Mammary epithelial cell (primary cell): ENCODE measurements at regions of chr9 and their contacts with region 1.

Region 1: DNA sequence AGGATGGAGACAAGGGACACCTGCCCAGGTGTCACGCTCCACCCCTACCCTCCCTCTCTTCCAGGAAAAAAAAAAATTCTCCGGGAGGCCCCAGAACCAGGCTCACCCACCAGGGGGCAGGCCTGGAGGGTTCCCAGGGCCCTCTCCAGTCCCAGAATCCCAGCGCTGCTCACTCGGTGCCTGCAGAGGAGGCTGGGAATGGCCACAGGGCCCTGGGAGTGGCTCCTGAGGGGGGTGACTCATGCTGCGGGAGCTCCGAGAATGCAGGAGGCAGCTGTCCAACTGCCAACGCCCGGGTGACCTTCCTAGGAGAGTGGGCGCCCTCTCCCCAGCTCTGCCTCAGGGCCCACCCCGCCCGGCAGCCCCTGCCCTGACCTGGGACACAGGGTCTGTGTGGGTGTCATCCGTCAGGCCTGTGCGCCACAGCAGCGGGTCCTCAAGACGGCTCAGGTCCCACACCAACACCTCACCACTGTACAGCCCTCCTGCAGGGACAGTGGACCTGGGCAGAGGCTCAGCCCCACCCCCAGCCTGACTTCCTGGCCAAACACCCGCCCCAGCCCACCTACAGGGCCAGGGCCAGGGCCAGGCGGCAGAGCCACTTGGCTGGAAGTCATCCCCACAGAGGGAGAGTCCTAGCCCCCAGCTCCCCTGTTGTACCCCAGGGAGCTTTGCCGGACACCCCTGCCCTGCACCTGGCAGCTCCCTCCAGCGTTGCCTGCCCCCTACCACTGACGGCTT is 21.2 kb downstream of the DYNC2I2 start:
- DNase-seq: peak; percentile 95
- H3K4me3 ChIP-seq: peak overlapping the region in 2 of 3 experiments; percentile 21 to 27
- H3K27ac ChIP-seq: peak overlapping the region; percentile 71
- H3K4me1 ChIP-seq: peaks cover 28% of the 10 kb centered on the region
- H3K27me3 ChIP-seq: no peaks in the 10 kb centered on the region
- CTCF ChIP-seq: peak; percentile 77 to 85

Region 2: GRCh38 chr9:128438343-128439109 is 196.9 kb before region 1 on chr9:
- CTCF ChIA-PET with region 1: no interaction called
- dilution Hi-C with region 1: no loop called
- in situ Hi-C with region 1: no loop called
- intact Hi-C with region 1: loop called (anchors 2 kb)
- DNase-seq: peak; percentile 47
- H3K4me3 ChIP-seq: no peak overlapping the region
- H3K27ac ChIP-seq: no peak overlapping the region
- H3K4me1 ChIP-seq: no peaks in the 10 kb centered on the region
- H3K27me3 ChIP-seq: no peaks in the 10 kb centered on the region
- CTCF ChIP-seq: peak; percentile 78 to 96

Region 3: DNA sequence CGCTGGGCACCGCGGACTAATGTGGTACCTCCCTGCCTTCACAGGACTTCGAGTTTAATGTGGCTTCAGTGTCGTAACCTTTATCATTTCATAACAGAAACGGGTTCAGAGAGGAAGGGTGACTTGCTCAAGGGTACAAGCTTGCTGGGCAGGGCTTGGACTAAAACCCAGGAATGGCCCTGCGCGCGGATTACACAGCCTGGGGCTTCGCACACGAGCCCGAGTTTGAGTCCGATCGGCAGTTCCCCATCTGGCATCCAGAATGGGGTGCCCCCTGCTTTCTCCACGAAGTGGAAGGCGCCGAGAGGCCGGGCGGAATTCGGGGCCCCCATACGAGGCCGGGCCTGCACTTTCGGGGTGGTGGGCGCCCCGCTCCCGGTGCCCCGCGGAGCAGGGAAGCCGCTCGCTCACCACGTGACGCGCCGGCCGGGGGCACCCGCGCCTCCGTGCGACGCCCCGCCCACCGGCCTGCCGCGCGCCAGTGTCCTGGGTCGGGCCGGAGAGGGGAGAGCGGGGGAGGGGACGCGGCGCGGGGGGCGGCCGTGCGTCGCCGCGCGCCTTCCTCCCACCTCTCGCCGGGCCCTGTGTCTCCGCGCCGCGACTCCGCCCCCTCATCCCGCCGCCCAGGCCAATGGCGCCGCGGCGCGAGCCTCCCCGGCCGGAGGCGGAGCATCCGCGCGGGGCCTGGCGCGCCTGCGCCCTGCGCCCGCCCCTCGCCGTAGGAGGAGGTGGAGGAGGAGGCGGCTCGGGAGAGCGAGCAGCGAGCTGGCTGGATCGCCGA is 53.2 kb after region 1 on chr9 and contains the start of gene SET:
- CTCF ChIA-PET with region 1: interaction called, 3 read pairs
- dilution Hi-C with region 1: no loop called
- in situ Hi-C with region 1: no loop called
- intact Hi-C with region 1: loop called (anchors 1 kb)
- DNase-seq: peak; percentile 90
- H3K4me3 ChIP-seq: peak within 1 kb of the TSS; percentile 79 to 92 (median 81)
- H3K27ac ChIP-seq: peak within 1 kb of the TSS; percentile 58
- H3K4me1 ChIP-seq: peaks cover 35% of the 10 kb centered on the region
- H3K27me3 ChIP-seq: no peaks in the 10 kb centered on the region
- CTCF ChIP-seq: no peak
- total RNA-seq, gene SET: 282 to 484 TPM

Region 4: DNA sequence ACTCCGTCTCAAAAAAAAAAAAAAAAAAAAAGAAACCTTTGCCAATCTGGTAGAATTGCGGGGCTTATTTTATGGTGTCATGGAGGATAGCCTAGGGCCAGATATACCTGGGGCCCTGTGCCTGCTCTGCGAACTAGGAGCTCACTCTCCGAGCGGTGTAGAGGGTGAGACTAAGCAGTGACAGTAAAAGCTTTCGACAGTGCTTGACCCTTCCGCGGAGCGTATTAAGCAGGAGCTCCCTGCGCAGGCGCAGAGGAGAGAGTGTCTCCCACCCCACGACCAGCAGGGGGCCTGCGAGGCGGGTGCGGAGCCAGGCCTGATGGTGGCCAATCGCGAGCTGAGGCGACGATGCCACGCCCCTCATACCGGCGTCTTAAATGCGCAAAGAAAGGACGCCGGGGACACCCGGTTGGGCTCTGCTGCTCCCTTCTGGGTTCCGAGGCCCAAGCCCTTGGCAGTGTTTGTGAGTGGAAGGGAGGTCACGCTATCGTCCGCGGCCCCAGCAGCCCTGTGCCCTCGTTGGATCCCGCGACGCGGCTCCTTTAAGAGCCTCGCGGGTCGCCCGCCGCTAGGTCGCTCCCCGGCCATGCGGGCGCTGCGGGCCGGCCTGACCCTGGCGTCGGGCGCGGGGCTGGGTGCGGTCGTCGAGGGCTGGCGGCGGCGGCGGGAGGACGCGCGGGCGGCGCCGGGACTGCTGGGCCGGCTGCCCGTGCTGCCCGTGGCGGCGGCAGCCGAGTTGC is 182.8 kb after region 1 on chr9 and contains the start of gene ENDOG:
- CTCF ChIA-PET with region 1: interaction called, 7 read pairs
- dilution Hi-C with region 1: no loop called
- in situ Hi-C with region 1: no loop called
- intact Hi-C with region 1: loop called (anchors 1 kb)
- DNase-seq: peak; percentile 93
- H3K4me3 ChIP-seq: peak within 1 kb of the TSS; percentile 75 to 80 (median 76)
- H3K27ac ChIP-seq: peak within 1 kb of the TSS; percentile 41
- H3K4me1 ChIP-seq: peaks cover 16% of the 10 kb centered on the region
- H3K27me3 ChIP-seq: no peaks in the 10 kb centered on the region
- CTCF ChIP-seq: peak; percentile 96 to 99
- total RNA-seq, gene ENDOG: 30.8 to 40.3 TPM

Region 5: DNA sequence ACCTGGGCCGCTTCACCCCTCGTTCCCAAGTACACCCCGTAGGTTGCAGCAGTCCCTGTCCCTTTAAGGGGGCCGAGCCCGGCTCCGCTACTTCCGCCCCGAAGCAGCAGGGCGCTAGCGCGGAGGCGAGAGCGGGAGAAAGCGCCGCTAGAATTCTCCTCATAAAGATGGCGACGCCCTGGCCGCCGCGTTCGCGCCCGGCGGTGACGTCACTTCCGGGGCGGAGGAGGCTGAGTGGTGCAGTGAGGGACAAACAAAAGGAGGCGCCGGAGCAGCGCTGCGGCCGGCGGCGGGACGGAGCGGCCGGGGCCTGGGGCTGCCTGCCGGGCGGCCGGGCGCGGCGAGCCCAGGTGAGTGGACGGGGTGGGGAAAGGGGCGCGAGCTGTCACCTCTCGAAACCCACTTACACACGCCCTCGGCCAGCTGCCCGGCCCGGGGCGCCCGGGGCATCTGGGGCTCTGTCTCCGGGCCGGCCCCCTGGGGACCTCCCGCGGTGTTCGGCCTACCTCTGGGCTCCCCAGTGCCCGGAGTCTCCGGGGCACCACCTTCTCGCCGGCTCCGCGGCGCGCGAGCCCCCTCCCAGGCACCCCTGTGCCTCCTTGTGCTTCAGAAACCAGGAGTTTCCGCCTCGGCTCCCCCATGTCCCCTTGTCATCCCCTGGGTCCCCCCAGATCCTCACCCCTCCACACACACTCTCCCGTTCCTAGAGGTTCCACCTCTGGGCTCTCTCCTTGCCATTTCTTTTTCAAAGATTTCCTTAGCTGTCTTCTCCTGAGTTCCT is 246.6 kb after region 1 on chr9 and contains the starts of genes KYAT1 and LRRC8A:
- CTCF ChIA-PET with region 1: no interaction called
- dilution Hi-C with region 1: no loop called
- in situ Hi-C with region 1: no loop called
- intact Hi-C with region 1: loop called (anchors 1 kb)
- DNase-seq: peak; percentile 96
- H3K4me3 ChIP-seq: peak within 1 kb of the TSS; percentile 85 to 88 (median 87)
- H3K27ac ChIP-seq: peak within 1 kb of the TSS; percentile 76
- H3K4me1 ChIP-seq: peaks cover 49% of the 10 kb centered on the region
- H3K27me3 ChIP-seq: no peaks in the 10 kb centered on the region
- CTCF ChIP-seq: no peak
- total RNA-seq, gene KYAT1: 10.2 to 11.5 TPM
- total RNA-seq, gene LRRC8A: 155 to 206 TPM